ENCODE measurements at regions of chr7 and their contacts with region 1.

Region 1: GRCh38 chr7:37201003-37201875 is 247.4 kb downstream of the ELMO1 start:
- DNase-seq: peak; percentile 79
- ATAC-seq: peak; percentile 83 to 88

Region 2: DNA sequence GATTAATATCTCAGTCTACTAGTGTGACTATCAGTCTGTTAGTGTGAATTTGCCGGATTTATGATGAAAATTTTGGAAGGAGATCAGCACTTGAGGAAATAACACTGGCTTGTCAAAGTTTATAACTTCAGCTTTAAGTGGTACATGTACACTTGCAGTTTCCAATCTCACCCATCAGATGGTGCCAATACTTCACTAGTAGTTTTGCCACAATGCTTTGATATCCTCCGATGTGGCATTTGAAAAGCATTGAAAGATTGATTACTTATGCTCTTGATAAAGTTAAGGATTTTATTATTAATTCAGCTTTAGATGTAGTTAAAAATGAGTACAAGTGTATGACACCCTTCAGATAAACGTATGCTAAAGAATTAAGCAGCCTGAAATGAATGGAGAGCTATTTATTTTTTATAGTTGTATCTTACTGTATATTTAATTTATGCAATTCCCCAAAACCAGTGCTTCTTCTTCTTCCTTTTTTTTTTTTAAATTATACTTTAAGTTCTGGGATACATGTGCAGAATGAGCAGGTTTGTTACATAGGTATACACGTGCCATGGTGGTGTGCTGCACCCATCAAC is 713.4 kb before region 1 on chr7:
- intact Hi-C with region 1: loop called in 1 of 2 experiments (anchors 2 kb)
- DNase-seq: no peak
- ATAC-seq: peak; percentile 47 to 57

Region 3: DNA sequence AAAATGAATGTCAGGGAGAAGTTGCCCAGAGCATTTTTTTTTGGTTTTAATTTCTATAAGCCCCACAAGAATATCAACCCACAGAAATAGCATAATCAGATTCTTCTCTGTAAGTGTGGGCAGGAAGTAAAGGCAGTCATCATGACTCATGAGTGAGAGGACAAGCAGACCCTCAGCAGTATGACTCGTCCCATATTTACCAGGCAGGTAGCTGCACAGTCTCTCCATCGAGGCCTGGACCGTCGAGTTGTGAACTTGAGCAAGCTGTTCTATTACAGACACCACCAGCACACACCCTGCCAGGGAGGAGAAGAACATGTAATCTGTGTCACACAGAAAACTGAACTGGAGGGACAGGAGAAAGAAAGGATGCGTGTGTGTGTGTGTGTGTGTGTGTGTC is 514.7 kb before region 1 on chr7:
- intact Hi-C with region 1: loop called in 1 of 2 experiments (anchors 10 kb)
- DNase-seq: no peak
- ATAC-seq: no peak

Region 4: GRCh38 chr7:36967387-36967786 is 233.9 kb before region 1 on chr7:
- intact Hi-C with region 1: loop called in 1 of 2 experiments (anchors 5 kb)
- DNase-seq: peak; percentile 63
- ATAC-seq: peak; percentile 93 to 96

Region 5: DNA sequence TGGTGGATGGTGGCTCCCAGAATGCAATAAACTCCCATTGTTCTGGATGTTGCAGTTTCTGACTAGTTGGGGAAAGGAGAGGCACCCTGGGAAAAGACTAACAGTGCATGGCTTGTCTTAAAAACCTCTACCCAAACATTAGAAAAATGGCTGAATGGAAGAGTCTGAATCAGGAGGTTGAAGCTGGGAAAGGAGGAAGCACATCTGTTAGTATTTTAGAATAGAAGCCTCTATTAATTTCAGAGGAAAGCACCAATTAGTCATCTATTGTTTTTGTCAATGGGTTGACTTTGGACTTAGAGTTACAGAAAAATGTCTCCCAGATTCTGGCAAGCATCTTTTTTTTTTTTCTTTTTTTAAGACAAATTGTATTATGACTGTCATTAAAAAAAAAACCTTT is 303.6 kb after region 1 on chr7:
- intact Hi-C with region 1: loop called in 1 of 2 experiments (anchors 10 kb)
- DNase-seq: no peak
- ATAC-seq: no peak

Region 6: GRCh38 chr7:37833107-37833817 is 632.0 kb after region 1 on chr7:
- intact Hi-C with region 1: loop called in 1 of 2 experiments (anchors 10 kb)
- DNase-seq: peak; percentile 36
- ATAC-seq: peak in 1 of 2 donors; percentile 56

Measured in left cardiac atrium (tissue), 4 donors.